Breast epithelium (tissue), 4 donors: ENCODE measurements at regions of chr4 and their contacts with region 1.

Region 1: GRCh38 chr4:10872833-10873517 is 188.4 kb upstream of the CLNK start:
- DNase-seq: no peak
- H3K4me3 ChIP-seq: no peak overlapping the region
- H3K27ac ChIP-seq: no peak overlapping the region
- H3K4me1 ChIP-seq: no peaks in the 10 kb centered on the region
- H3K27me3 ChIP-seq: no peaks in the 10 kb centered on the region
- CTCF ChIP-seq: no peak
- POLR2A ChIP-seq: no peak

Region 2: GRCh38 chr4:10509730-10510129 is 363.2 kb before region 1 on chr4:
- intact Hi-C with region 1: loop called (anchors 5 kb)
- DNase-seq: no peak
- H3K4me3 ChIP-seq: no peak overlapping the region
- H3K27ac ChIP-seq: no peak overlapping the region
- H3K4me1 ChIP-seq: no peaks in the 10 kb centered on the region
- H3K27me3 ChIP-seq: no peaks in the 10 kb centered on the region
- CTCF ChIP-seq: no peak
- POLR2A ChIP-seq: no peak